Common myeloid progenitor, CD34-positive (primary cell): ENCODE measurements at regions of chr17 and their contacts with region 1.

Region 1: DNA sequence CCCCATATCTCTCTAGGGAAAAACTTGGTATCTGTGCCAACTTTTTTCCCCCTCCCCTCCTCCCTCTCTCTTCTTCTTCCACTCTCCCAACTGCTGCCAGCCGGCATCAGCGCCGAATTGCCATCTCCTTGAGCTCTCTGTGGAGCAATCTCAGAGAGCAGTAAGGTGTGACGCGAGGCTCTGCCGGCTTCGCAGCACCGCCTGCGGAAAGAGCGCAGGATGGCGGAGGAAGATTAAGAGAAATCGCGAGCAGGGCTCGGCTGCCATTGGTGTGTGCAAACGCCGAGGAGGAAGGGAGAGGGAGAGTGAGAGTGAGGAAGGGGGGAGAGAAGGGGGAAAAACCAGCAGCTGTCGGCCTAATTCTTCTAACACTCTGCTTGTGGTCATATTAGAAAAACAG is 44.2 kb downstream of the NEUROD2 start:
- DNase-seq: peak; percentile 59 to 88 (median 81)
- H3K4me3 ChIP-seq: peak overlapping the region in 3 of 7 experiments; percentile 9 to 48 (median 41)
- H3K27ac ChIP-seq: no peak overlapping the region
- H3K4me1 ChIP-seq: peaks cover 0 to 15% (median 6%) of the 10 kb centered on the region in 4 experiments
- H3K27me3 ChIP-seq: no peaks in the 10 kb centered on the region

Region 2: DNA sequence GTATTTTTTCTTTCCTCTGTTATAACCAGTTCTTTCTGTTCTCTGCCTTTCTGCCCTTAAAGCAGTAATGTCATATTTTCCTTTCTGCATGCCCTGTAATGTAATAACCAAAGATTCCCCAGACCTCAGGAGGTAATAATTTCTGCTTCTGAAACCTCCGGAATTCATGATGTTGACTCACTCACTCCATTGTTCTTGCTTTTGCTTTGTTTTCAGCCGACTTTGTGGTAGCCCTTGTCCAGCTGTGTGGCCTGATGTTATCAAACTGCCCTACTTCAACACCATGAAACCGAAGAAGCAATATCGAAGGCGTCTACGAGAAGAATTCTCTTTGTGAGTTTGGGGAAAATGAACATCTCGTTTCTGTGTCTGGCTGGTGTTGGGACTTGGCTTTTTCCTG is 46.3 kb before region 1 on chr17:
- CTCF ChIA-PET with region 1: no interaction called
- POLR2A ChIA-PET with region 1: no interaction called
- DNase-seq: no peak
- H3K4me3 ChIP-seq: no peak overlapping the region
- H3K27ac ChIP-seq: no peak overlapping the region
- H3K4me1 ChIP-seq: no peaks in the 10 kb centered on the region
- H3K27me3 ChIP-seq: no peaks in the 10 kb centered on the region

Region 3: GRCh38 chr17:39576187-39576586 is 12.7 kb after region 1 on chr17:
- CTCF ChIA-PET with region 1: interaction called, 15 read pairs
- POLR2A ChIA-PET with region 1: interaction called, 4 read pairs
- DNase-seq: peak; percentile 31 to 56 (median 54)
- H3K4me3 ChIP-seq: no peak overlapping the region
- H3K27ac ChIP-seq: no peak overlapping the region
- H3K4me1 ChIP-seq: peaks cover 0 to 9% (median 4%) of the 10 kb centered on the region in 4 experiments
- H3K27me3 ChIP-seq: peaks cover 0 to 17% (median 3%) of the 10 kb centered on the region in 5 experiments